Caco-2 (cell line): ENCODE measurements at regions of chr9 and their contacts with region 1.

Region 1: GRCh38 chr9:116572095-116572748 is 114.9 kb upstream of the TRIM32 start:
- DNase-seq: peak; percentile 82 to 86
- H3K4me3 ChIP-seq: no peak overlapping the region
- H3K4me3 Mint-ChIP-seq: no peak overlapping the region
- H3K27ac Mint-ChIP-seq: no peak overlapping the region
- H3K4me1 ChIP-seq: peaks cover 64% of the 10 kb centered on the region
- H3K4me1 Mint-ChIP-seq: peaks cover 23% of the 10 kb centered on the region
- H3K27me3 ChIP-seq: no peaks in the 10 kb centered on the region
- H3K27me3 Mint-ChIP-seq: no peaks in the 10 kb centered on the region
- CTCF ChIP-seq: peak; percentile 91 to 95

Region 2: DNA sequence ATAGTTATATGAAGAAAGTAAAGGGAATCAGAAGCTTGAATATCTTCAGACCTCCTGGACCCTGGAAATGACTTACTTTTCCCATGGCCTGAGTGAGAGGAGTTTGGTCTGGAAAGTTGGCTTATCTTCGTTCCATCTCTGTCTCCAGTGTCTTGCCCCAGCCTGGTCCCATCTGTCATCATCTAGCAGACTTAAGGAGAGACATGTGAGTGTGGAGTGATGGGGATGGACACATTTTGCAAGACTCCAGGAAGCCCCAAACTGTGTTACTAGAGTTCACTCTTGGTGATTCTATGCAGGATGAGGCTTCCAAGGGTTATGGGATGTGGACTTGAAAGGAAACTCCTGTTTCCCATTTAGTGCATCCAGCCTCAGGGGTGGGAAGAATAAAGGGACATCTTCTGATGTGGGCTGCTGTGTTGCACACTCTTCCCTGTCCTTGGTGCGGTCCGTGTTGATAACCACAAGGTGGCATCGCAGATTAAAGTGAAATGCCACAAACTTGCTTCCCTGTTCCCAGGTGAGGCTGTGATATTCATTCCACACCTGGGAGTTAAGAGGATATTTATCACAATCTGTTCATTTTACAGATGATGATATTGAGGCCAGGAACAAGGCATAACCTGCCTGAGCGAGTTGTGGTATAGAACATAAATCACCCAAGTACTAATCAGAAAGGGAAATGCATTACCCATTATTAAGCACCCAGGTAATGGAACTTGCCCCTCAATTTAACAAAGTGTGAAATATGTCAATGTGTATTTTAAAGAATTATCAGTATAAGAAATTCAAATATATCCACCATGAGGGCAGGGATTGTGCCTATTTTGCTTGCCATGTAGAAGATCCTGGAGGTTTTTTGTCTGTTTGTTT is 688.5 kb before region 1 on chr9:
- CTCF ChIA-PET with region 1: no interaction called
- POLR2A ChIA-PET with region 1: no interaction called
- intact Hi-C with region 1: loop called (anchors 1 kb)
- DNase-seq: peak; percentile 37 to 42
- H3K4me3 ChIP-seq: no peak overlapping the region
- H3K4me3 Mint-ChIP-seq: no peak overlapping the region
- H3K27ac Mint-ChIP-seq: no peak overlapping the region
- H3K4me1 ChIP-seq: no peaks in the 10 kb centered on the region
- H3K4me1 Mint-ChIP-seq: no peaks in the 10 kb centered on the region
- H3K27me3 ChIP-seq: no peaks in the 10 kb centered on the region
- H3K27me3 Mint-ChIP-seq: peaks cover 12% of the 10 kb centered on the region
- CTCF ChIP-seq: peak; percentile 63 to 67

Region 3: DNA sequence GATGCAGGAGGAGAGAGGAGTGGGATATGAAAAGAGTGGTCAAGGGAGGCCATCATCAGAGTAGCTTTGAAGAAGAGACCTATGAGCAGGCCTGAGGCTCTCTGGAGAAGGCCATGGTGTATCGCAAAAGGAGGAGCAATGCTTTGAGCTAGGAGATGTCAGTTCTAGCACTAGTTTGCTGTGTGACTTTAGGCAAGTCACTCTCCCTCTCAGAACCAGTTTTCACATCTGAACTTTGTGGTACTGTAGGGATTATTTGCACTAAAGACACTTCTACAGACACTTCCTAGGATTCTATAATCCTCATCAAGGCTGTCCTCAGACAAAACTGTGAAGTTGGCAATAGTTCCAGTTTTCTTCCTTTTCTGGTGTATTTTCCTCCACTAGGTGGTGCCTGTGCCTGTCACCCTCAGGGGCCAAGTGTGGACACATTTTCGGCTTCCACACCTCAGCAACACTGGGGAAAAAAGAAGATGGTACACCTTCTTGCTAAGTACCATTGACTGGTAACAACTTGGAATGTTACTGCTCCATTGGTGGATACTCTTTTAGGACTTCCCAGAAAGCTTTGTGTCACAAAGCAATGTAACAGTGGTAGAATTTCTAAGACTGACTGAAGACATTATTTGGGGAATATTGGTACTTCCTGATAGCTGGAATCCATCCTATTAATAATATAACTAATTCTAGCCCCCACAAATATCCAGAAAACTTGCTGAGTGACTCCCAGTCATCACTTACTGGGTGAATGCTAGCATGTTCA is 408.7 kb before region 1 on chr9:
- CTCF ChIA-PET with region 1: interaction called, 4 read pairs
- POLR2A ChIA-PET with region 1: no interaction called
- intact Hi-C with region 1: loop called (anchors 1 kb)
- DNase-seq: peak in 1 of 2 experiments; percentile 17
- H3K4me3 ChIP-seq: no peak overlapping the region
- H3K4me3 Mint-ChIP-seq: no peak overlapping the region
- H3K27ac Mint-ChIP-seq: no peak overlapping the region
- H3K4me1 ChIP-seq: no peaks in the 10 kb centered on the region
- H3K4me1 Mint-ChIP-seq: no peaks in the 10 kb centered on the region
- H3K27me3 ChIP-seq: no peaks in the 10 kb centered on the region
- H3K27me3 Mint-ChIP-seq: peaks cover 16% of the 10 kb centered on the region
- CTCF ChIP-seq: peak; percentile 54 to 64

Region 4: GRCh38 chr9:116345393-116346165 is 226.6 kb before region 1 on chr9:
- CTCF ChIA-PET with region 1: no interaction called
- POLR2A ChIA-PET with region 1: no interaction called
- intact Hi-C with region 1: loop called (anchors 5 kb)
- DNase-seq: peak; percentile 11 to 50
- H3K4me3 ChIP-seq: no peak overlapping the region
- H3K4me3 Mint-ChIP-seq: no peak overlapping the region
- H3K27ac Mint-ChIP-seq: peak overlapping the region; percentile 4
- H3K4me1 ChIP-seq: peaks cover 11% of the 10 kb centered on the region
- H3K4me1 Mint-ChIP-seq: peaks cover 15% of the 10 kb centered on the region
- H3K27me3 ChIP-seq: no peaks in the 10 kb centered on the region
- H3K27me3 Mint-ChIP-seq: peaks cover 3% of the 10 kb centered on the region
- CTCF ChIP-seq: no peak

Region 5: DNA sequence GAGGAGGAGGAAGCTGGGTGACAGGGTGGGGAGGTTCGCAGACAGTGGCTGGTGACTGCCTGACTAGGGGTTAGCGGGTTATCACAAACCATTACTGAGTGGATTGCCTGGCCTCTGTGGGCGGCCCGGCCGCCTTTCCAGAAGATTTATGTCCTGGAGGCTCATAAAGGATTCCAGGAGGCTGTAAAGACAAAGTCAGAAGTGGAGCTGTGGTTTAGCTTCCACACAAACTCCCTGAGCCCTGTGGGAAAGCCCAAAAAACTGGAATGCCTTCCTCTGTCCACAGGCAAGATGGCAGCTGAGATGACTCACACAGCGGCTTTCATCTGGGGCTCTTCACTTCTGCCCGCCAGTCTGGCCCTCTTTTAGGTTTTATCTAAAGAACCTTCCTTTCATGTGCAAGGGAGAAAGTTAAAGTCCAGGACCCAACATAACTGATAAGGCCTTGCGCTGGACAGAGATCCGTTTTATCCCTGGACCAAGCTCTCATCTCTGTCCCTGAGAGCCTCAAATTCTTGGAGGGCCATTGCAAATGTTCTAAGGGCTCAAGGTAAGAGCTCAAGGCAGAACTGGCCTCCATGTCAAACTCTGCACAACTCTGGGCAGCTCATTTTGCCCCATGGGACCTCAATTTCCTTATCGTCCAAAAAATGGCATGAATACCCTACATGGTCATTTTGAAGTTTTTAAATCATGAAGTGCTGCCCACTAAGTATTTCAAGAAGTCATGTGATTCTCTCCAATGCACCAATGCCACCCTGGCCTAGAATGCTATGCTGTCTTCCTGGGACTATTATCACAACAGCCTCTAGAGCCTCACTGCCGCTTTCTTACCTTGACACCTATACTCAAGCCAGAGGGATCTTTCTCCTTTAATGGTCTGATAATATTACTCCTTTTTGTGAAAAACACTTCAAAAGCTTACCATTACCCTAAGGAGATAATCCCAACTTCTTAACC is 134.5 kb before region 1 on chr9:
- CTCF ChIA-PET with region 1: no interaction called
- POLR2A ChIA-PET with region 1: no interaction called
- intact Hi-C with region 1: loop called (anchors 5 kb)
- DNase-seq: peak; percentile 20 to 72
- H3K4me3 ChIP-seq: no peak overlapping the region
- H3K4me3 Mint-ChIP-seq: no peak overlapping the region
- H3K27ac Mint-ChIP-seq: no peak overlapping the region
- H3K4me1 ChIP-seq: peaks cover 11% of the 10 kb centered on the region; the same call in 1 of the 2 replicates
- H3K4me1 Mint-ChIP-seq: peaks cover 6% of the 10 kb centered on the region
- H3K27me3 ChIP-seq: no peaks in the 10 kb centered on the region
- H3K27me3 Mint-ChIP-seq: no peaks in the 10 kb centered on the region
- CTCF ChIP-seq: no peak

Region 6: DNA sequence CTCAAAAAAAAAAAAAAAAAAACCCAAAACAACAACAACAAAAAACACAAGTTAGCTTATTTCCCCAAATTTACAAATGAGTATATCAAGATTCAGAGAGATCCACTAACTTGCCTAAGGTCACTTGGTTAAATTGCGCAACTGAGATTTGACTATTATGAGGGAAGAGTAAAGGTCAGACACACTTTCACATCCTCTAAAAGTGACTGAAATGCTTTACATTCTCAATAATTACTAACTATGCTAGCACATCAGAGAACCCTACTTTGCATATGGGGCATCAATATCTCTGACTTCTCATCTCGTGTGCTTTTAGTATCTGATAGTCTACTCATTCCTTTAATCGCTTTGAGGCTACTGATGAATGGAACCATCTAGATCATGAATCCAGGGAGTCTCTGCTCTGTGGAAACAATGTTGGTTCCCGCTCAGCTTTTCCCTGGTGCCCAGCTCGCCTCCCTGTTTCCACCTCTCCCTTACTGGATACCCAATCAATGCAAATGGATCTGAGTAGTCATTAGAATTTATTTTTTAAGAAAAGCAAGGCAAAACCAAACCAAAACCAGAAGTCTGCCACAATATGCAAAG is 67.2 kb before region 1 on chr9:
- CTCF ChIA-PET with region 1: interaction called, 3 read pairs
- POLR2A ChIA-PET with region 1: no interaction called
- intact Hi-C with region 1: loop called (anchors 2 kb)
- DNase-seq: peak in 1 of 2 experiments; percentile 3
- H3K4me3 ChIP-seq: no peak overlapping the region
- H3K4me3 Mint-ChIP-seq: no peak overlapping the region
- H3K27ac Mint-ChIP-seq: no peak overlapping the region
- H3K4me1 ChIP-seq: peaks cover 20% of the 10 kb centered on the region
- H3K4me1 Mint-ChIP-seq: peaks cover 27% of the 10 kb centered on the region
- H3K27me3 ChIP-seq: no peaks in the 10 kb centered on the region
- H3K27me3 Mint-ChIP-seq: no peaks in the 10 kb centered on the region
- CTCF ChIP-seq: no peak

Region 7: DNA sequence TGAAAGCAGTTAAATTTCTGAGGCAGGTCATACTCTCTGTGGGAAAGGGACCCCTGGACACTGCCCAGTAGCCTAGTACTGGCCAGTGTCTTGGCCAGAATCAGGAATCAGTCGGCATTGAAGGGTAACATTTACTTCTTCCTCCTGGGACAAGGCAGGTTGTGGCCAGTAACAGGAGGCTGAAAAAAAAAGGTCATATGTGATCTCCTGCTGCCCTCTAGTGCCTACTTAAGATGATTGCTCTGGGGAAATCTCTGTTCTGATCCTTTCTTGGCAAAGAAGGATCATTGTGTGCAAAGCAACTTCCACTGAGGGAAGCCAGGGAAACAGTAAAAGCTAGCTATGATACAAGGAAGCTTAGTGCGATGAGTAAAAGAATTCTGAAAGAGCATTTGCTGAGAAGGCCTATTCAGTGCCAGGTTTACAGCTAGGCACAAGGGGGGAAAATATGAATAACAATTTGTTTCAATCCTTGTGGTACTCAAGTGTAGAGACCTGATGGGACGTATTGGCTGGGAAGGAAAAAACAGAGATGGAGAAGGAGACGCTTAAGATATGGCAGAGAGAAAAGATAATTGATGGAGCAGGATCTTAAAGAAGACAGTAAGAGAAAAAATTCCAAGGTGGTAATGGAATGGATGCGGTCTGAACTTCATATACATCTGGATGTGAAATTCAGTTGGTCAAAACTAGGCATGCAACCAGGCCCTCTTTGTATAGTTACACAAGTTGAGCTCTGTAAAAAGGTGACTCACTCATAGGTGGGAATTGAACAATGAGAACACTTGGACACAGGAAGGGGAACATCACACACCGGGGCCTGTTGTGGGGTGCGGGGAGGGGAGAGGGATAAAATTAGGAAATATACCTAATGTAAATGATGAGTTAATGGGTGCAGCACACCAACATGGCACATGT is 89.1 kb after region 1 on chr9:
- CTCF ChIA-PET with region 1: no interaction called
- POLR2A ChIA-PET with region 1: no interaction called
- intact Hi-C with region 1: loop called (anchors 1 kb)
- DNase-seq: peak in 1 of 2 experiments; percentile 48
- H3K4me3 ChIP-seq: no peak overlapping the region
- H3K4me3 Mint-ChIP-seq: no peak overlapping the region
- H3K27ac Mint-ChIP-seq: no peak overlapping the region
- H3K4me1 ChIP-seq: no peaks in the 10 kb centered on the region
- H3K4me1 Mint-ChIP-seq: no peaks in the 10 kb centered on the region
- H3K27me3 ChIP-seq: no peaks in the 10 kb centered on the region
- H3K27me3 Mint-ChIP-seq: no peaks in the 10 kb centered on the region
- CTCF ChIP-seq: peak; percentile 73 to 75